Activated T-helper 1 cell treated with anti-CD3 and anti-CD28 coated beads, Interleukin-12 subunit alpha, Interleukin-12 subunit beta, Interleukin-2, Interleukin-4 antibody, amounts not matched to agents 30 ng/mL and 10 ng/mL and 1 ng/mL, durations not matched to agents 14 hours and 24 hours and 36 hours (primary cell): ENCODE measurements at regions of chr6 and their contacts with region 1.

Region 1: GRCh38 chr6:152267967-152268845 is 369.0 kb downstream of the SYNE1 start:
- DNase-seq: no peak
- H3K4me3 Mint-ChIP-seq: no peak overlapping the region
- H3K27ac Mint-ChIP-seq: no peak overlapping the region
- H3K4me1 Mint-ChIP-seq: peaks cover 8% of the 10 kb centered on the region
- H3K27me3 Mint-ChIP-seq: no peaks in the 10 kb centered on the region

Region 2: DNA sequence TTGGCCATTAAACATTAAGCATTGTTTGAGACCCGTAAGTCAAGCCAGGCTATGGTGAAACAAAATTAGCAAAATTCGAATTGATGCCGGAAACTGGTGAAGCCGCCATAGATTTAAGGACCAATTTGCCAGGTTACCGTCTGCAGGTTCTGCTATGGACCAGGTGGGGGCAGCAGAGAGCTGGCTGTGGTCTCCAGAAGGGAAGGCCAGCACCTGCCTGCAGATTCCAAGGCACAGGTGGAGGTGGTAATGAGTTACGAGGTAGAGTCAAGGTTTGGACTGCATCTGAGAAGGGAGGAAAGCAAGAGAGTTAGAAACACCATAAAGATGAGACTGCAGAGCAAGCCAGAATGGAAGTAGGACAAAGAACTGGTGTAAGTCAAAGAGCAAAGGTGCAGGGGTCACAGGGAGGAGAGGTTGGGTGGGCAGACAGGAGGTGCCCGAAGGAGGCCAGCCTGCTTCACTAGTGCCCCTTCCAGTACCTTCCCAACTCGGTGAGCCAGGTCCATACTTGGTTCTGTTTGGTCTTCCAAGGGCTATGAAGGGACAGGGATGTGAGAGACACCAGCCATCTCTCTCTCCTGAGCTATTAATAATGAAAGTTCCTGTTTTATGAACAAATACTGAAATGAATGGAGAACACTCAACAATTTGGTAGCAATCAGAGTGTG is 592.3 kb before region 1 on chr6:
- intact Hi-C with region 1: loop called (anchors 1 kb)
- DNase-seq: peak; percentile 42
- H3K4me3 Mint-ChIP-seq: no peak overlapping the region
- H3K27ac Mint-ChIP-seq: no peak overlapping the region
- H3K4me1 Mint-ChIP-seq: peaks cover 14% of the 10 kb centered on the region
- H3K27me3 Mint-ChIP-seq: peaks cover 2% of the 10 kb centered on the region

Region 3: DNA sequence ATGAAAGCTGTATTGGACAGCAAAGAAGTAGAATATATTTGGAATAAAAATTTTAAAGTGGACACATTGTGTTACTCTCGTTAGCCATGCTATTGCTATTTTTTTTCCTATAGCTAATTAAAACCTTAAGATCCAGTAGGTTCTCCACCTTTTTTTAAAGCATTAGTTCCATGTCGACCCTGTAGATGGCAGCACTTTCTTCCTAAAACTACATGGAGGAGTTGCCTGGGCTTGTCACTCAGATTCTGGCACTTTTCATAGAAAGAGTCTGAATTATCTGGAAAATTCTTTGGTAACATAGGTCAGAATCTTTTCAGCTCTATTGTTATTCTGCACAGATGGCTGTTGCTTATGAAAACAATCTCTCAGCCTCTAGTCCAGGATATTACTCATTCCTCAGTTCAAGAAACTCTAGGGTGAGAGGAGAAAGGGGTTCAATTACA is 502.7 kb before region 1 on chr6:
- intact Hi-C with region 1: loop called (anchors 1 kb)
- DNase-seq: peak; percentile 40
- H3K4me3 Mint-ChIP-seq: no peak overlapping the region
- H3K27ac Mint-ChIP-seq: no peak overlapping the region
- H3K4me1 Mint-ChIP-seq: peaks cover 34% of the 10 kb centered on the region
- H3K27me3 Mint-ChIP-seq: peaks cover 22% of the 10 kb centered on the region

Region 4: GRCh38 chr6:152124429-152125074 is 143.7 kb before region 1 on chr6:
- intact Hi-C with region 1: loop called (anchors 5 kb)
- DNase-seq: no peak
- H3K4me3 Mint-ChIP-seq: no peak overlapping the region
- H3K27ac Mint-ChIP-seq: no peak overlapping the region
- H3K4me1 Mint-ChIP-seq: no peaks in the 10 kb centered on the region
- H3K27me3 Mint-ChIP-seq: no peaks in the 10 kb centered on the region

Region 5: GRCh38 chr6:152338335-152339125 is 70.3 kb after region 1 on chr6:
- intact Hi-C with region 1: loop called (anchors 1 kb)
- DNase-seq: peak; percentile 13
- H3K4me3 Mint-ChIP-seq: no peak overlapping the region
- H3K27ac Mint-ChIP-seq: no peak overlapping the region
- H3K4me1 Mint-ChIP-seq: peaks cover 6% of the 10 kb centered on the region
- H3K27me3 Mint-ChIP-seq: peaks cover 18% of the 10 kb centered on the region